WTC11 (cell line): ENCODE measurements at regions of chr1 and their contacts with region 1.

Region 1: GRCh38 chr1:156136970-156137483 is 16.4 kb upstream of the SEMA4A start:
- DNase-seq: peak; percentile 55
- ATAC-seq: peak; percentile 24; the same call in 1 of the 2 replicates
- H3K4me3 Mint-ChIP-seq: no peak overlapping the region
- H3K27ac Mint-ChIP-seq: no peak overlapping the region
- H3K4me1 Mint-ChIP-seq: peaks cover 9% of the 10 kb centered on the region
- H3K27me3 Mint-ChIP-seq: no peaks in the 10 kb centered on the region
- CTCF ChIP-seq: no peak

Region 2: GRCh38 chr1:156096640-156097391 is 40.2 kb before region 1 on chr1:
- CTCF ChIA-PET with region 1: interaction called, 1,176 read pairs
- POLR2A ChIA-PET with region 1: interaction called, 3 read pairs
- DNase-seq: peak; percentile 92
- ATAC-seq: peak; percentile 94
- H3K4me3 Mint-ChIP-seq: no peak overlapping the region
- H3K27ac Mint-ChIP-seq: no peak overlapping the region
- H3K4me1 Mint-ChIP-seq: peaks cover 20% of the 10 kb centered on the region
- H3K27me3 Mint-ChIP-seq: no peaks in the 10 kb centered on the region
- CTCF ChIP-seq: peak; percentile 90

Region 3: GRCh38 chr1:156160743-156161171 is 23.7 kb after region 1 on chr1:
- CTCF ChIA-PET with region 1: interaction called, 16 read pairs
- POLR2A ChIA-PET with region 1: no interaction called
- DNase-seq: peak; percentile 87
- ATAC-seq: peak; percentile 95
- H3K4me3 Mint-ChIP-seq: peak overlapping the region; percentile 71
- H3K27ac Mint-ChIP-seq: no peak overlapping the region
- H3K4me1 Mint-ChIP-seq: peaks cover 27% of the 10 kb centered on the region
- H3K27me3 Mint-ChIP-seq: no peaks in the 10 kb centered on the region
- CTCF ChIP-seq: no peak

Region 4: GRCh38 chr1:156193488-156194299 is 56.7 kb after region 1 on chr1 and contains the start of gene SLC25A44:
- CTCF ChIA-PET with region 1: interaction called, 22 read pairs
- POLR2A ChIA-PET with region 1: interaction called, 4 read pairs
- DNase-seq: peak; percentile 97
- ATAC-seq: peak; percentile 98
- H3K4me3 Mint-ChIP-seq: peak within 1 kb of the TSS; percentile 99
- H3K27ac Mint-ChIP-seq: peak within 1 kb of the TSS; percentile 98
- H3K4me1 Mint-ChIP-seq: peaks cover 35% of the 10 kb centered on the region
- H3K27me3 Mint-ChIP-seq: no peaks in the 10 kb centered on the region
- CTCF ChIP-seq: peak; percentile 37
- total RNA-seq, gene SLC25A44: 17.9 to 29.1 TPM (median 19.7 TPM) in 3 replicates

Region 5: GRCh38 chr1:156233426-156234127 is 96.5 kb after region 1 on chr1:
- CTCF ChIA-PET with region 1: interaction called, 34 read pairs
- POLR2A ChIA-PET with region 1: no interaction called
- DNase-seq: no peak
- ATAC-seq: no peak
- H3K4me3 Mint-ChIP-seq: no peak overlapping the region
- H3K27ac Mint-ChIP-seq: no peak overlapping the region
- H3K4me1 Mint-ChIP-seq: no peaks in the 10 kb centered on the region
- H3K27me3 Mint-ChIP-seq: no peaks in the 10 kb centered on the region
- CTCF ChIP-seq: no peak

Region 6: DNA sequence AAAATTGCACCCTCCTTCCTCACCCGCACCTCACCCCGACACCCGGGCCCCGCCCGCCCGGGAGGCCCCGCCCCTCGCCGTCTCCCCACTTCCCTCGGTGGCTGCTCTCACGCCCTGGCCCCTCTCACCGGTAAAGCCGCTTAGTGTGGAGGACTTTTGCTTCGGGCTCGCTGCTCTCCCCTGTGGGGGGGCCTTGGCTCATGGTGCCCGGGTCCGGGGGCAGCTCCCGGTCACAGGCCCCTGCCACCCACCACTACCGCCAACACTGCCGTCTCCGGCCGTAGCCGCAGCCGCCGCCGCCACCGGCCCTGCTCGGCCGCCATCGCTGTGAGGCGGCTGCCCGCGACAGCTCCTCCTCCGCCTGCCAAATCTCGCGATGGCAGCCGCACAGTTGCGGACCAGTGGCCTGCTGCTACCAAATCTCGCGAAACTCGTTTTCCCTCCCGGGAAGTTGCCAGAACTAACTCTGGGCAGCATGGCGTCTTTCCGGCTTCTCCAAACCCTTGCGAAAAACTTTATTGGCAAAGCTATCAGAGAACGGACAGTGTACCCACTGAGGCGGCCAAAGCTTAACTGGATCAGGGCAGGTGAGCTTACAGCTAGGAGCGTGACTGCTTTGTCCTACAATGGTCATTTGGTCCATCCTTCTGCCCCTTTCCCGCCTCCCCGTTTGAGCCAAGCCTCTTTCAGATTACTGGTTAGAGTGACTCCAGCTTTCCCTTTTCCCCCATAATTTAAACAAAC is 145.6 kb after region 1 on chr1 and contains the start of gene SMG5:
- CTCF ChIA-PET with region 1: interaction called, 18 read pairs
- POLR2A ChIA-PET with region 1: no interaction called
- DNase-seq: peak; percentile 97
- ATAC-seq: peak; percentile 94
- H3K4me3 Mint-ChIP-seq: peak within 1 kb of the TSS; percentile 97
- H3K27ac Mint-ChIP-seq: peak within 1 kb of the TSS; percentile 97
- H3K4me1 Mint-ChIP-seq: peaks cover 24% of the 10 kb centered on the region
- H3K27me3 Mint-ChIP-seq: no peaks in the 10 kb centered on the region
- CTCF ChIP-seq: no peak
- total RNA-seq, gene SMG5: 87.7 to 109 TPM (median 91.1 TPM) in 3 replicates